Vagina (tissue), 2 donors: ENCODE measurements at regions of chr1 and their contacts with region 1.

Region 1: GRCh38 chr1:37682334-37682987 is 9.9 kb upstream of the CDCA8 start:
- DNase-seq: no peak
- H3K4me3 ChIP-seq: no peak overlapping the region
- H3K27ac ChIP-seq: no peak overlapping the region
- H3K4me1 ChIP-seq: peaks cover 2% of the 10 kb centered on the region
- H3K27me3 ChIP-seq: no peaks in the 10 kb centered on the region
- CTCF ChIP-seq: peak; percentile 68 to 89 (median 70)
- POLR2A ChIP-seq: no peak

Region 2: DNA sequence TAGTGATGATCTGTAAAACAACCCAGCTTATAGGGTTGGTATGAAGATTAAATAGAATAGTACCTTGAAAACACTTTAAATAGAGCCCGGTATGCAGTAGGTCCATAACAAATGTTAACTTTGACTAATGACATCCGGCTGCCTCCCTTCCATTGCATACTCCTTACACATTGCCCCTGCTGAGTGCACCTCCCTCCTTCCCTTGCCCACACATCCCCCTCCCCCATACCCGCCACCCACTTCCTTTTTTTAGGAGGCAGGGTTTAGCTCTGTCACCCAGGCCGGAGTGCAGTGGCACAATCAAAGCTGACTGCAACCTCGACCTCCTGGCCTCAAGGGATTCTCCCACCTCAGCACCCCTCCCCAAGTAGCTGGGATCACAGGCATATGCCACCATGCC is 232.5 kb before region 1 on chr1:
- intact Hi-C with region 1: loop called (anchors 10 kb)
- DNase-seq: no peak
- H3K4me3 ChIP-seq: no peak overlapping the region
- H3K27ac ChIP-seq: no peak overlapping the region
- H3K4me1 ChIP-seq: peaks cover 4% of the 10 kb centered on the region
- H3K27me3 ChIP-seq: no peaks in the 10 kb centered on the region
- CTCF ChIP-seq: no peak
- POLR2A ChIP-seq: no peak

Region 3: DNA sequence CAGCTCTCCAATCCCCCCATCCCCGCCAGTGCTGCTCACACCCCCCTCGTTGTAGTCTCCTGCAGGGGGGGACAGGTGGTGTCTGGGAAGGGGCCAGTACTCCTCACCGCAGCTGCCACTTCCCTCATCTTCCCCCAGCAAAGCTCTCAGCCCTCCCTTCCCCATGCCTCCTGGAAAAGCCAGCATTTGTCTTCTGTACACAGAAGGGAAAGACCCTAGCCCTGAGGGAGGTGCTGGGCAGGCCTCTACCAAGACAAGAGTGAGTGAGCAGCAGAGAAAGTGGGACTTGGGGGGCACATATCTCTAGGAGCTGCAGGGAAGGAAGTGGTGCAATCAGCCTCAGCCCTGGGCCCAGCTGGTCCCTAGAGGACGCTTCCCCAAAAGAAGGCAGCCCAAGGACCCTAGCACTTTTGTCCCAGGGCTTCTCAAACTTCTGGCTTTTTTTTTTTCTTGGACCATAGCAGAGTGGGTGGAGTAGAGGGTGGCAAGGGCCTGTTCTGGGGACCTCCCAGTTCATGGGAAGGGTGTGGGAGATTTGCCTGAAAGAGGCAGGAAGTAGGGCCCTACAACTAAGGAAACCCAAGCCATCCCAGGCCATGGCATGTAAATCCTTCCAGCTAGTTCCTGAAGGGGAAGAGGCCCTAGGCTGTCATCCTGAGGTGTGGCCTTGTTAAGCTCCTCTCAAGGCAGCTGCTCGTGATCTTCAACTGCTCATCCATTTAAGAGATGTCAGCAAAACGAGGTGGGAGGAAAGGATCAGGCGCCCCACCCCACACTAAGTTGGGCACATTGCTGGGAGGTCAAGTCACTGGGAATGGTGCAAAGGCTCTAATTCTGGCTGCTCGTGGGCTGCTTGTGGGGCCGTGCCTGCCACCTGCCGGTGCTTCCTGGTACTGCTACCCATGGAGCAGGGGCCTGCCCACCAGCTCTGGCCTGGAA is 195.5 kb before region 1 on chr1:
- intact Hi-C with region 1: loop called (anchors 10 kb)
- DNase-seq: peak in 1 of 2 donors; percentile 94
- H3K4me3 ChIP-seq: no peak overlapping the region
- H3K27ac ChIP-seq: peak overlapping the region; percentile 71
- H3K4me1 ChIP-seq: peaks cover 39% of the 10 kb centered on the region
- H3K27me3 ChIP-seq: no peaks in the 10 kb centered on the region
- CTCF ChIP-seq: peak; percentile 98 to 99 (median 98)
- POLR2A ChIP-seq: no peak

Region 4: GRCh38 chr1:37595440-37596319 is 86.8 kb before region 1 on chr1 and contains the start of gene GNL2:
- intact Hi-C with region 1: loop called (anchors 5 kb)
- DNase-seq: peak in 1 of 2 donors; percentile 96
- H3K4me3 ChIP-seq: peak within 1 kb of the TSS; percentile 71 to 78
- H3K27ac ChIP-seq: peak within 1 kb of the TSS; percentile 63
- H3K4me1 ChIP-seq: peaks cover 26% of the 10 kb centered on the region
- H3K27me3 ChIP-seq: no peaks in the 10 kb centered on the region
- CTCF ChIP-seq: no peak
- POLR2A ChIP-seq: peak in 1 of 2 donors; percentile 53
- total RNA-seq, gene GNL2: 62.1 TPM